GM12878 (cell line): ENCODE measurements at regions of chr1 and their contacts with region 1.

Region 1: GRCh38 chr1:78676347-78676982 is 26.8 kb downstream of the IFI44 start:
- DNase-seq: no peak
- ATAC-seq: peak; percentile 70
- H3K4me3 ChIP-seq: no peak overlapping the region
- H3K27ac ChIP-seq: no peak overlapping the region
- H3K4me1 ChIP-seq: peaks cover 11% of the 10 kb centered on the region
- H3K27me3 ChIP-seq: no peaks in the 10 kb centered on the region
- CTCF ChIP-seq: peak; percentile 54 to 76 (median 56)
- EP300 ChIP-seq: no peak
- POLR2A ChIP-seq: no peak
- RAD21 ChIP-seq: peak; percentile 86

Region 2: DNA sequence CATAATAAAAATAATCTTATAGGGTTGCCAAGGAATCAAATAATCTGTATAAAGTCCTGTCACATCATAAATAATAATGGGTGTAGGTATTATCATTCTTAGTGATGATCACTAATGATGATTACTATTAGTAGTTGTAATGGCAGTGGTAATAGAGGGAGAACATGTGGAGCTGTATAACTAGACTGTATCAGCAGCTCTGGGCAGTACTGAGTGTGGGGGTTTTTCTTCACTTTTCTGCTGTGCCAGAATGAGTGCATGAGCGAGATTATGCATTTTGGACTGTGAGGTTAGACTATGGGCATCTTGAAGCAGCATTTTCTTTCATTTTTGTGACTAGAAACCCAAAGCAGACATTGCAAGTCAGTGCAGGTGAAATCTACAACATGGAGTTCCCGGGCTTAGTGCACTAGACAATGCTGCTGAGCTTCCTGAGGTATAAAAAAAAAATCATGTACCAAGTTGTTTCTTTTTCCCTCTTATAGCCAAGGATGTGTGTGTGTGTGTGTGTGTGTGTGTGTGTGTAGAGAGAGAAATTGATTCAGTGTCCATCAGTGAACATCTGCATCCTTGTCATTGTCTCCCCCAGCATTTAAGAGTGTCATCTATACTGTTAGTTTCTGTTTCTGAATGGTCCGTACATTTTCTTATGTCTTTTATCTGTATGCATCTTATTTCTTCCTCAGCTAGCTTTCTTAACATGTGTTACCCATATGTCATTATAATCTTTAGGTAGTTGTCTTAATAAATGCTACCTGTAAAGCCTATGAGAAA is 544.1 kb before region 1 on chr1:
- CTCF ChIA-PET with region 1: interaction called, 18 read pairs
- POLR2A ChIA-PET with region 1: no interaction called
- RAD21 ChIA-PET with region 1: interaction called, 12 read pairs
- SMC1A ChIA-PET with region 1: interaction called, 8 read pairs
- in situ Hi-C with region 1: no loop called
- intact Hi-C with region 1: loop called (anchors 5 kb)
- DNase-seq: no peak
- ATAC-seq: peak; percentile 59
- H3K4me3 ChIP-seq: no peak overlapping the region
- H3K27ac ChIP-seq: no peak overlapping the region
- H3K4me1 ChIP-seq: no peaks in the 10 kb centered on the region; the same call in 1 of the 2 replicates
- H3K27me3 ChIP-seq: no peaks in the 10 kb centered on the region
- CTCF ChIP-seq: no peak
- EP300 ChIP-seq: no peak
- POLR2A ChIP-seq: no peak
- RAD21 ChIP-seq: no peak

Region 3: GRCh38 chr1:78323311-78323710 is 353.2 kb before region 1 on chr1:
- CTCF ChIA-PET with region 1: interaction called, 3 read pairs
- POLR2A ChIA-PET with region 1: no interaction called
- RAD21 ChIA-PET with region 1: no interaction called
- SMC1A ChIA-PET with region 1: no interaction called
- in situ Hi-C with region 1: no loop called
- intact Hi-C with region 1: loop called (anchors 10 kb)
- DNase-seq: no peak
- ATAC-seq: no peak
- H3K4me3 ChIP-seq: no peak overlapping the region
- H3K27ac ChIP-seq: no peak overlapping the region
- H3K4me1 ChIP-seq: no peaks in the 10 kb centered on the region
- H3K27me3 ChIP-seq: no peaks in the 10 kb centered on the region
- CTCF ChIP-seq: no peak
- EP300 ChIP-seq: no peak
- POLR2A ChIP-seq: no peak
- RAD21 ChIP-seq: no peak

Region 4: DNA sequence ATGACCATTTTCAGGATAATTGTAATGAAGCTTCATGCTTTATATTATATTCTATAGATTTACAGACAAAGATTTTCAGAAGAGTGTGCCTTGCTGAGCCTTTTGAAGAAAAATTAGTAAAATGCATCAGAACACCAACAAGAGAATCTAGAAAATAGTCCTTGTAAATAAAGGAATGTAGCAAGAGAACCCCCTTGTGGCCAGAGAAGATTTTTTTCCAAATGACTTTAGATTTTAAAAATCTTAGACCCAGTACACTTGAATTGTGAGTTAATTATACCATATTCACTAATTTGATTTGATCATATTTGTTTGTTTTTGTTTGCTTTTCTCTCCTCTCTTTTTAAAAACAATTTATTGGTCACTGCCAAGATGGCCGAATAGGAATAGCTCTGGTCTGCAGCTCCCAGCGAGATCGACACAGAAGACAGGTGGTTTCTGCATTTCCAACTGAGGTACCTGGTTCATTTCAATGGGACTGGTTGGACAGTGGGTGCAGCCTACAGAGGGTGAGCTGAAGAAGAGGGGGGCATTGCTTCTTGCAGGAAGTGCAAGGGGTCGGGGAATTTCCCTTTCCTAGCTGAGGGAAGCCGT is 69.0 kb before region 1 on chr1:
- CTCF ChIA-PET with region 1: interaction called, 12 read pairs
- POLR2A ChIA-PET with region 1: interaction called, 4 read pairs
- RAD21 ChIA-PET with region 1: no interaction called
- SMC1A ChIA-PET with region 1: interaction called, 8 read pairs
- in situ Hi-C with region 1: no loop called
- intact Hi-C with region 1: no loop called
- DNase-seq: no peak
- ATAC-seq: peak; percentile 61
- H3K4me3 ChIP-seq: no peak overlapping the region
- H3K27ac ChIP-seq: no peak overlapping the region
- H3K4me1 ChIP-seq: no peaks in the 10 kb centered on the region
- H3K27me3 ChIP-seq: no peaks in the 10 kb centered on the region
- CTCF ChIP-seq: peak; percentile 30 to 51 (median 31); a peak in 4 of 6 replicates
- EP300 ChIP-seq: no peak
- POLR2A ChIP-seq: no peak
- RAD21 ChIP-seq: peak; percentile 62

Region 5: DNA sequence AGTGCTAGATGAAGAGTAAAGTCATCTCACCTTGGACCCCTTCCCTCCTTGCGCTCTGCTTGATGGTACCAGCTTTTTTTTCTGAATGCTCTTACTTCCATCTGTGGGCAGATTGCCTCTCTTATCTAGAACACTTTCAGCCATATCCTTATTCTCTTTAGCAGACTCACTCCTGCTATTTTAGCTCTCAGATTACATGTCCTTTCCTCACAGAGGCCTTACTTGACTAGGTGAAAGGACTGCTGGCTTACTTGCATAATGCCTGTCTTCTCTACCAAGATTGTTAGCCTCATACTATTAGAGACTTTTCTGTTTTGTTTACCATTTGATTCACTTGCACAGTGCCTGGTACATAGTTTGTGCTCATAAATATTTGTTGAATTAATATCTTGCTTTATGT is 17.6 kb before region 1 on chr1:
- CTCF ChIA-PET with region 1: interaction called, 28 read pairs
- POLR2A ChIA-PET with region 1: interaction called, 3 read pairs
- RAD21 ChIA-PET with region 1: interaction called, 4 read pairs
- SMC1A ChIA-PET with region 1: interaction called, 21 read pairs
- in situ Hi-C with region 1: no loop called
- intact Hi-C with region 1: no loop called
- DNase-seq: no peak
- ATAC-seq: no peak
- H3K4me3 ChIP-seq: no peak overlapping the region
- H3K27ac ChIP-seq: no peak overlapping the region
- H3K4me1 ChIP-seq: no peaks in the 10 kb centered on the region
- H3K27me3 ChIP-seq: no peaks in the 10 kb centered on the region
- CTCF ChIP-seq: no peak
- EP300 ChIP-seq: no peak
- POLR2A ChIP-seq: no peak
- RAD21 ChIP-seq: no peak

Region 6: GRCh38 chr1:78664763-78665162 is 11.7 kb before region 1 on chr1:
- CTCF ChIA-PET with region 1: interaction called, 28 read pairs
- POLR2A ChIA-PET with region 1: interaction called, 3 read pairs
- RAD21 ChIA-PET with region 1: interaction called, 3 read pairs
- SMC1A ChIA-PET with region 1: interaction called, 21 read pairs
- in situ Hi-C with region 1: no loop called
- intact Hi-C with region 1: no loop called
- DNase-seq: no peak
- ATAC-seq: peak; percentile 54
- H3K4me3 ChIP-seq: no peak overlapping the region
- H3K27ac ChIP-seq: no peak overlapping the region
- H3K4me1 ChIP-seq: no peaks in the 10 kb centered on the region
- H3K27me3 ChIP-seq: no peaks in the 10 kb centered on the region
- CTCF ChIP-seq: no peak
- EP300 ChIP-seq: no peak
- POLR2A ChIP-seq: peak; percentile 17; the same call in 1 of the 2 replicates
- RAD21 ChIP-seq: no peak